A673 (cell line): ENCODE measurements at regions of chr11 and their contacts with region 1.

Region 1: GRCh38 chr11:38438091-38438490 is 1840.1 kb upstream of the RAG2 start:
- DNase-seq: no peak
- H3K4me3 ChIP-seq: no peak overlapping the region
- H3K27ac ChIP-seq: no peak overlapping the region
- H3K4me1 ChIP-seq: no peaks in the 10 kb centered on the region
- H3K27me3 ChIP-seq: no peaks in the 10 kb centered on the region
- CTCF ChIP-seq: no peak

Region 2: GRCh38 chr11:38425578-38425977 is 12.5 kb before region 1 on chr11:
- CTCF ChIA-PET with region 1: no interaction called
- POLR2A ChIA-PET with region 1: no interaction called
- intact Hi-C with region 1: no loop called
- DNase-seq: no peak
- H3K4me3 ChIP-seq: no peak overlapping the region
- H3K27ac ChIP-seq: no peak overlapping the region
- H3K4me1 ChIP-seq: no peaks in the 10 kb centered on the region
- H3K27me3 ChIP-seq: no peaks in the 10 kb centered on the region
- CTCF ChIP-seq: no peak

Region 3: GRCh38 chr11:38491986-38492385 is 53.9 kb after region 1 on chr11:
- CTCF ChIA-PET with region 1: no interaction called
- POLR2A ChIA-PET with region 1: no interaction called
- intact Hi-C with region 1: loop called (anchors 5 kb)
- DNase-seq: no peak
- H3K4me3 ChIP-seq: no peak overlapping the region
- H3K27ac ChIP-seq: no peak overlapping the region
- H3K4me1 ChIP-seq: no peaks in the 10 kb centered on the region
- H3K27me3 ChIP-seq: no peaks in the 10 kb centered on the region
- CTCF ChIP-seq: no peak

Region 4: DNA sequence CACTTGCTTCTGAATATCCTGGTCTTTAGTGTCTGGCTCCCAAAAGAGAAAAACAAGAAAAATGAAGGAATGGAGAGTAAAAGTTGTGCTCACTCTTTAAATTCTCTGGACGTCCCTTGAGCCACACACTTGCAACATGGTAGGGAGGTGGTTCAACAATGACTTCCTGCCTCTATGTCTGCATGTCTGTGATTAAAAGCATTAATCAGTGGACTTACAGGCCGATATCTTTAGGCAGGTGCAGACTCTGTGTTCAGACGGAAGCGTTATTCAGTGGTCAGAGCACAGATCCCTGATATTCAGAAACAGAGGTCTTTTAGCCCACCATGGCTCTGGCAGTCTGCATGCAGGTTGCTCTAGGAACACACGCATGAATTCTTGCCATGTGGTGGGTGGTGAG is 79.9 kb after region 1 on chr11:
- CTCF ChIA-PET with region 1: no interaction called
- POLR2A ChIA-PET with region 1: no interaction called
- intact Hi-C with region 1: no loop called
- DNase-seq: no peak
- H3K4me3 ChIP-seq: no peak overlapping the region
- H3K27ac ChIP-seq: no peak overlapping the region
- H3K4me1 ChIP-seq: no peaks in the 10 kb centered on the region
- H3K27me3 ChIP-seq: no peaks in the 10 kb centered on the region
- CTCF ChIP-seq: no peak